PC-3 (cell line): ENCODE measurements at regions of chr7 and their contacts with region 1.

Region 1: DNA sequence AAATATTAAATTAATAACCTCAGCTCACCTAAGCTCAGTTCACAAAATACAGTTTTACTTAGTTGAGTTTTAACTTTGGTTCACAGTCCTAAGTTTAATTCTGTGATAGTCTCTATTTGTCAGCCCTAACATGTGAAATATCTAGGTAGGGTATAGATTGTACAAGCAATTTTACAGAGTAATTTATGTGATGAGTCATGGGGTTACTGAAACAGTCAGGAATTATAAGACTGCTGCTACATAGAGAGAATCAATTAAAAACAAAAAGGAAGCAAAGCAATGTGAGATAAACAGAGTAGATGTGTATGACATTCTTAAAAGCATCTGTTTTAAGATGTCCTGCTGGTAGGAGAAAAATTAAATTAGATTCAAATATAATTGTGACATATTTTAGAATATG is 1018.2 kb upstream of the KCND2 start:
- DNase-seq: peak; percentile 65
- ATAC-seq: peak; percentile 53
- H3K4me3 ChIP-seq: no peak overlapping the region
- H3K27ac ChIP-seq: no peak overlapping the region
- H3K4me1 ChIP-seq: peaks cover 58% of the 10 kb centered on the region
- H3K27me3 ChIP-seq: no peaks in the 10 kb centered on the region
- CTCF ChIP-seq: no peak

Region 2: DNA sequence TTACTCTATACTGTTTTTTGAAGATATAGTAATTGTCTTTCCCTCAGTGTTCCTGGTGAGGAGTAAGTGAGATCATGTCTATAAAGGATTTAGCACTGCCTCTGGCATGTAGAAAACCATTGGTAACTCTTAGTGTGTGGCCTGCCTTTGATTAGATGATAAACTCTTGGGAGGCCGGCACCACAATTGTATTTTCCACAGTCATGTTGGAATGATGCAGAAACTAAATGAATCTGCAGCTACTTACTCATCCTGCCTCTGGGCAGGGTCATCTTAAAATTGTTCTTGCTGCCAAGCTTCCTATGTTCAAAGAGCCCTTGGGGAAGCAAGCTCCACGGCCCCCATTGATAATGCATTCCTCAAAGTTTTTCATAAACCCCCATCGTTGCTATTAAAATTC is 825.6 kb before region 1 on chr7:
- CTCF ChIA-PET with region 1: no interaction called
- POLR2A ChIA-PET with region 1: no interaction called
- intact Hi-C with region 1: no loop called
- DNase-seq: no peak
- ATAC-seq: no peak
- H3K4me3 ChIP-seq: no peak overlapping the region
- H3K27ac ChIP-seq: no peak overlapping the region
- H3K4me1 ChIP-seq: no peaks in the 10 kb centered on the region
- H3K27me3 ChIP-seq: no peaks in the 10 kb centered on the region
- CTCF ChIP-seq: no peak

Region 3: GRCh38 chr7:119335405-119335804 is 80.7 kb after region 1 on chr7:
- CTCF ChIA-PET with region 1: no interaction called
- POLR2A ChIA-PET with region 1: no interaction called
- intact Hi-C with region 1: loop called (anchors 5 kb)
- DNase-seq: peak; percentile 83
- ATAC-seq: peak; percentile 98
- H3K4me3 ChIP-seq: no peak overlapping the region
- H3K27ac ChIP-seq: no peak overlapping the region
- H3K4me1 ChIP-seq: no peaks in the 10 kb centered on the region
- H3K27me3 ChIP-seq: no peaks in the 10 kb centered on the region
- CTCF ChIP-seq: no peak

Region 4: GRCh38 chr7:119452401-119452800 is 197.7 kb after region 1 on chr7:
- CTCF ChIA-PET with region 1: no interaction called
- POLR2A ChIA-PET with region 1: no interaction called
- intact Hi-C with region 1: loop called (anchors 5 kb)
- DNase-seq: peak; percentile 49
- ATAC-seq: peak; percentile 91
- H3K4me3 ChIP-seq: 0 out of 2 replicates have a peak overlapping the region, but pooled peaks have one; percentile 32
- H3K27ac ChIP-seq: peak overlapping the region; percentile 30; the same call in 1 of the 2 replicates
- H3K4me1 ChIP-seq: peaks cover 13% of the 10 kb centered on the region; the same call in 1 of the 2 replicates
- H3K27me3 ChIP-seq: no peaks in the 10 kb centered on the region
- CTCF ChIP-seq: no peak

Region 5: GRCh38 chr7:119545118-119545517 is 290.4 kb after region 1 on chr7:
- CTCF ChIA-PET with region 1: interaction called, 7 read pairs
- POLR2A ChIA-PET with region 1: no interaction called
- intact Hi-C with region 1: loop called (anchors 5 kb)
- DNase-seq: peak; percentile 92
- ATAC-seq: peak; percentile 91
- H3K4me3 ChIP-seq: no peak overlapping the region
- H3K27ac ChIP-seq: peak overlapping the region; percentile 67
- H3K4me1 ChIP-seq: peaks cover 33% of the 10 kb centered on the region
- H3K27me3 ChIP-seq: no peaks in the 10 kb centered on the region
- CTCF ChIP-seq: no peak

Region 6: GRCh38 chr7:120089968-120090367 is 835.2 kb after region 1 on chr7:
- CTCF ChIA-PET with region 1: no interaction called
- POLR2A ChIA-PET with region 1: no interaction called
- intact Hi-C with region 1: loop called (anchors 5 kb)
- DNase-seq: peak; percentile 65
- ATAC-seq: peak; percentile 98
- H3K4me3 ChIP-seq: no peak overlapping the region
- H3K27ac ChIP-seq: no peak overlapping the region
- H3K4me1 ChIP-seq: no peaks in the 10 kb centered on the region
- H3K27me3 ChIP-seq: no peaks in the 10 kb centered on the region
- CTCF ChIP-seq: peak; percentile 59